Prostate gland (tissue), 2 donors: ENCODE measurements at regions of chr4 and their contacts with region 1.

Region 1: DNA sequence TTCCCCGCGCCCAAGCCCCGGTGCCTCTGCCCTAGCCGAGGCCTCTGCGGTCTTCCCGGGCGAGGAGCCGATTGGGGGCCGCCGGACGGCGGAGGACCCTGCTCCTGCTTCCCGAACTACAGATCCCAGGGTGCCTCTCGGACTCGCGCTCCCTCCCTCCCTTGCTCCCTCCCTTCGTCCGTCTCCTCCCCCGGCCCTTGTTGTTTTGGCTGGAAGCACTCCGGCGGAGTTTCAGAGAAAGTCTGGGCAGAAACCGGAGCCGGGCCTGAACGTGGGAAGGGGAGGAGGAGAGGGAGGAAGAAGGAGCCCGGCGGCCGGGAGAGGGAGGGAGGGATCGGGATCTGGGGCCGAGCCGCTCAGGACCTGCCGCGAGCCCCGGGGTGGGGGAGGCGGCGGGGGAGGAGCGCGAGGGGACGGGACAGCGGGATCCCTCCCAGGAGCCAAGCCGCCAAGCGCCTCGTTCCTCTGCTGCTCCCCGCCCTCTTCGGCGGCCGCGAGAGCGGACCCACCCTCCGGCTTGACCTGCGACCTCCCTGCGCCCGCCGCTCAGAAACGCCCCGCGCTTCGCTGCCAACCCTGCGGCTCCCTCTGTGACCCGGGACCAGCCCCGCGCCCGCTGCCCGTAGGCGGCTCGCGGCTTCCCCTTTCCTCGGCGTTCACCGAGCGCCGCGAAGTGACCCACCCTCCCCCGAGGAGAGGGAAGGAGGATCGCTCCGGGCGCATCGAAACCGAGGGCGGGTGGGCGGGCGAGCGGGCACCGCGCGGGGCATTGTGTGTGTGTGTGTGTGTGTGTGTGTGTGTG is 496 bp upstream of the GAB1 start:
- DNase-seq: peak; percentile 82
- H3K4me3 ChIP-seq: peak overlapping the region; percentile 88 to 93
- H3K27ac ChIP-seq: peak overlapping the region; percentile 95 to 99
- H3K4me1 ChIP-seq: no peaks in the 10 kb centered on the region
- H3K27me3 ChIP-seq: no peaks in the 10 kb centered on the region
- CTCF ChIP-seq: no peak
- POLR2A ChIP-seq: peak; percentile 37

Region 2: GRCh38 chr4:143207557-143207956 is 128.6 kb before region 1 on chr4:
- intact Hi-C with region 1: loop called (anchors 5 kb)
- DNase-seq: no peak
- H3K4me3 ChIP-seq: no peak overlapping the region
- H3K27ac ChIP-seq: no peak overlapping the region
- H3K4me1 ChIP-seq: no peaks in the 10 kb centered on the region
- H3K27me3 ChIP-seq: no peaks in the 10 kb centered on the region
- CTCF ChIP-seq: peak in 2 of 4 experiments; percentile 22 to 35
- POLR2A ChIP-seq: no peak

Region 3: DNA sequence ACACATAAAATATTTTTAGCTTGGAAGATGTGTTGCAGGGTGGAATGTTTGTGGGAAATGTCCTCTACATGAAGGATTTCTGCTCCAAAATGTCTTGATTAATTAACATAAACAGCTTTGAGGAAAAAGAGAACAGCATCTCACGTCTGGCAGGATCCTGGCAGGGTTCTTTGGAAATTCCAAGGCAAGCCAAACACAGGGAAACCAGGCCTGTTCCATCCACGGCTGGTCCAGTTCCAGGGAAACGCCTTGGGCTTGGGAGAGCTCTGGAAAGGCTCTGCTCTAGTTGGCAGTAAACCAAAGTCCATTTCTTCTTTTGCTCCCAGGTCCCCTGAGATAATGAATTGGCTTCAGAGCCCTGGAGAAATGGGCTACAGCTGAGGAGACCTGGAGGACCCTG is 41.9 kb before region 1 on chr4:
- intact Hi-C with region 1: loop called (anchors 5 kb)
- DNase-seq: no peak
- H3K4me3 ChIP-seq: no peak overlapping the region
- H3K27ac ChIP-seq: no peak overlapping the region
- H3K4me1 ChIP-seq: no peaks in the 10 kb centered on the region
- H3K27me3 ChIP-seq: no peaks in the 10 kb centered on the region
- CTCF ChIP-seq: no peak
- POLR2A ChIP-seq: no peak

Region 4: GRCh38 chr4:143381171-143382118 is 45.3 kb after region 1 on chr4:
- intact Hi-C with region 1: loop called (anchors 5 kb)
- DNase-seq: peak; percentile 63
- H3K4me3 ChIP-seq: no peak overlapping the region
- H3K27ac ChIP-seq: peak overlapping the region; percentile 55 to 62
- H3K4me1 ChIP-seq: no peaks in the 10 kb centered on the region
- H3K27me3 ChIP-seq: no peaks in the 10 kb centered on the region
- CTCF ChIP-seq: no peak
- POLR2A ChIP-seq: no peak

Region 5: GRCh38 chr4:143482840-143483239 is 146.7 kb after region 1 on chr4:
- intact Hi-C with region 1: loop called (anchors 10 kb)
- DNase-seq: no peak
- H3K4me3 ChIP-seq: no peak overlapping the region
- H3K27ac ChIP-seq: no peak overlapping the region
- H3K4me1 ChIP-seq: no peaks in the 10 kb centered on the region
- H3K27me3 ChIP-seq: no peaks in the 10 kb centered on the region
- CTCF ChIP-seq: peak; percentile 12 to 69 (median 52)
- POLR2A ChIP-seq: no peak

Region 6: GRCh38 chr4:143564472-143564871 is 228.3 kb after region 1 on chr4:
- intact Hi-C with region 1: no loop called
- DNase-seq: no peak
- H3K4me3 ChIP-seq: no peak overlapping the region
- H3K27ac ChIP-seq: no peak overlapping the region
- H3K4me1 ChIP-seq: no peaks in the 10 kb centered on the region
- H3K27me3 ChIP-seq: no peaks in the 10 kb centered on the region
- CTCF ChIP-seq: no peak
- POLR2A ChIP-seq: no peak